ENCODE measurements at regions of chr6 and their contacts with region 1.

Region 1: GRCh38 chr6:20092071-20092566 is 120.2 kb downstream of the MBOAT1 start:
- DNase-seq: peak; percentile 17
- ATAC-seq: peak; percentile 54
- H3K4me3 ChIP-seq: no peak overlapping the region
- H3K27ac ChIP-seq: no peak overlapping the region
- H3K4me1 ChIP-seq: no peaks in the 10 kb centered on the region
- H3K27me3 ChIP-seq: no peaks in the 10 kb centered on the region
- CTCF ChIP-seq: peak; percentile 53 to 70 (median 69); a peak in 5 of 6 replicates
- EP300 ChIP-seq: no peak
- POLR2A ChIP-seq: no peak
- RAD21 ChIP-seq: peak; percentile 78

Region 2: DNA sequence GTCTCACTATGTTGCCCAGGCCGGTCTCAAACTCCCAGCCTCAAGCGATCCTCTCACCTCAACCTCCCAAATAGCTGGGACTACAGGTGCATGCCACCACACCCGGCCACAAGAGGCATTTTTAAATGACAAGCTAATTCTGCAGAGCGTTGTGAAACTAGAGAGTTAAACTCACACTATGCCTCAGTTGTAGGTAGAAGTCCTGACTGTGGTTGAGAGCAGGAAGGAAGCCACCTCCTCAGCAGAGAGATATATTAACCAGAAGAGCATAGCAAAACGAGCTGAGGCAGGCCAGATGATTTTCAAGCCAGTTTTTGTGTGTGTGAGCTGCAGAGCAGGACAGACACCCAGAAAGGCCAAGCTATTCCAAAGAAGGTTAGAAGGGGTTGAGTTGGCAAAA is 30.2 kb before region 1 on chr6:
- CTCF ChIA-PET with region 1: no interaction called
- POLR2A ChIA-PET with region 1: no interaction called
- RAD21 ChIA-PET with region 1: no interaction called
- SMC1A ChIA-PET with region 1: no interaction called
- in situ Hi-C with region 1: no loop called
- intact Hi-C with region 1: no loop called
- DNase-seq: no peak
- ATAC-seq: no peak
- H3K4me3 ChIP-seq: no peak overlapping the region
- H3K27ac ChIP-seq: no peak overlapping the region
- H3K4me1 ChIP-seq: no peaks in the 10 kb centered on the region
- H3K27me3 ChIP-seq: no peaks in the 10 kb centered on the region
- CTCF ChIP-seq: no peak
- EP300 ChIP-seq: no peak
- POLR2A ChIP-seq: no peak
- RAD21 ChIP-seq: no peak

Region 3: GRCh38 chr6:20266851-20267608 is 174.9 kb after region 1 on chr6:
- CTCF ChIA-PET with region 1: interaction called, 39 read pairs
- POLR2A ChIA-PET with region 1: no interaction called
- RAD21 ChIA-PET with region 1: interaction called, 7 read pairs
- SMC1A ChIA-PET with region 1: interaction called, 10 read pairs
- in situ Hi-C with region 1: no loop called
- intact Hi-C with region 1: no loop called
- DNase-seq: peak; percentile 12
- ATAC-seq: peak; percentile 94
- H3K4me3 ChIP-seq: no peak overlapping the region
- H3K27ac ChIP-seq: peak overlapping the region; percentile 35
- H3K4me1 ChIP-seq: peaks cover 7% of the 10 kb centered on the region
- H3K27me3 ChIP-seq: no peaks in the 10 kb centered on the region; a peak in 1 of 4 replicates
- CTCF ChIP-seq: no peak
- EP300 ChIP-seq: no peak
- POLR2A ChIP-seq: no peak
- RAD21 ChIP-seq: no peak

Region 4: DNA sequence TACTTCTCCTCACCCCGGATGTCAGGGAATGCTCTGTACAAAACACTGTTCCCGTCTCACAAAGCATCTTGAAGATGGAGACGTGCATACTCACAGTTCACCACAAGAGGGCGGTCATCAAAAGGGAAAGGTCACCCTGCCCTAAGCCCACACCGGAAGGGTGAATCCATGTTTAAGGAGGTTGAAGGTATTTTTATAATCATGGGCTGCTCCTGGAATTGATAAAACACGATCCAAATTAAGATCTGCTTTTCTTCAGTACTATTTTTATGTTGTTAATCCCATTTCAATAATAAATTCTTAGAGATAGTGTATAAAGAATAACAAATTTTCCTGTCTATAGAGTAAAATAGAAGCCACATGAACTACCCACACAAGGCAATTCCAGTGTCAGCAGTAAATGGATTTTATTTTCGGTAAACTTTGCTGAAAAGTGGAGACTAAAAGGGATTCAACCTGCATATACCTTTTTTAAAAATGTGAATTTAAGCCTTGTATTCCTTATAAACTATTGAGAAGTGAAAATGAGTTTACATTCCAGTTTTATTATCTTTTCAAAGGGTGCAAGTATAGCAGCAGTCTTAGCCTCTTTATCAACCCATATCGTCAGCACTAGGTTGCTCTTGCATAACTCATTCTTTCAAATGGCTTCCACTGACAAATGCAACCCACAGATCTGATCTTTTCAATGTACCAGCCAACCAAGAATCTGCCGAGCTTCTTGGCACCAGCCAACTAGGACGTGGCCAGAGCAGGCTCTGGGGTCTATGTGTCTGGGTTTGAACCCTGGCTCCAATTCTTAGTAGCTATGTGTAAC is 199.9 kb after region 1 on chr6:
- CTCF ChIA-PET with region 1: interaction called, 8 read pairs
- POLR2A ChIA-PET with region 1: no interaction called
- RAD21 ChIA-PET with region 1: interaction called, 5 read pairs
- SMC1A ChIA-PET with region 1: interaction called, 6 read pairs
- in situ Hi-C with region 1: no loop called
- intact Hi-C with region 1: loop called (anchors 2 kb)
- DNase-seq: peak; percentile 52
- ATAC-seq: peak; percentile 92
- H3K4me3 ChIP-seq: no peak overlapping the region
- H3K27ac ChIP-seq: no peak overlapping the region
- H3K4me1 ChIP-seq: no peaks in the 10 kb centered on the region
- H3K27me3 ChIP-seq: no peaks in the 10 kb centered on the region
- CTCF ChIP-seq: peak; percentile 88 to 93 (median 90)
- EP300 ChIP-seq: no peak
- POLR2A ChIP-seq: no peak
- RAD21 ChIP-seq: peak; percentile 99

Region 5: GRCh38 chr6:20534295-20535262 is 442.5 kb after region 1 on chr6 and contains the start of gene CDKAL1:
- CTCF ChIA-PET with region 1: interaction called, 4 read pairs
- POLR2A ChIA-PET with region 1: no interaction called
- RAD21 ChIA-PET with region 1: no interaction called
- SMC1A ChIA-PET with region 1: no interaction called
- in situ Hi-C with region 1: loop called (anchors 5 kb)
- intact Hi-C with region 1: loop called (anchors 1 kb)
- DNase-seq: peak; percentile 91
- ATAC-seq: peak; percentile 89
- H3K4me3 ChIP-seq: peak within 1 kb of the TSS; percentile 93
- H3K27ac ChIP-seq: peak within 1 kb of the TSS; percentile 89
- H3K4me1 ChIP-seq: peaks cover 6% of the 10 kb centered on the region; the same call in 1 of the 2 replicates
- H3K27me3 ChIP-seq: no peaks in the 10 kb centered on the region
- CTCF ChIP-seq: no peak
- EP300 ChIP-seq: no peak
- POLR2A ChIP-seq: peak; percentile 87
- RAD21 ChIP-seq: no peak
- polyA plus RNA-seq, gene CDKAL1: 10.7 to 10.9 TPM